IMR-90 (cell line): ENCODE measurements at regions of chr9 and their contacts with region 1.

Region 1: DNA sequence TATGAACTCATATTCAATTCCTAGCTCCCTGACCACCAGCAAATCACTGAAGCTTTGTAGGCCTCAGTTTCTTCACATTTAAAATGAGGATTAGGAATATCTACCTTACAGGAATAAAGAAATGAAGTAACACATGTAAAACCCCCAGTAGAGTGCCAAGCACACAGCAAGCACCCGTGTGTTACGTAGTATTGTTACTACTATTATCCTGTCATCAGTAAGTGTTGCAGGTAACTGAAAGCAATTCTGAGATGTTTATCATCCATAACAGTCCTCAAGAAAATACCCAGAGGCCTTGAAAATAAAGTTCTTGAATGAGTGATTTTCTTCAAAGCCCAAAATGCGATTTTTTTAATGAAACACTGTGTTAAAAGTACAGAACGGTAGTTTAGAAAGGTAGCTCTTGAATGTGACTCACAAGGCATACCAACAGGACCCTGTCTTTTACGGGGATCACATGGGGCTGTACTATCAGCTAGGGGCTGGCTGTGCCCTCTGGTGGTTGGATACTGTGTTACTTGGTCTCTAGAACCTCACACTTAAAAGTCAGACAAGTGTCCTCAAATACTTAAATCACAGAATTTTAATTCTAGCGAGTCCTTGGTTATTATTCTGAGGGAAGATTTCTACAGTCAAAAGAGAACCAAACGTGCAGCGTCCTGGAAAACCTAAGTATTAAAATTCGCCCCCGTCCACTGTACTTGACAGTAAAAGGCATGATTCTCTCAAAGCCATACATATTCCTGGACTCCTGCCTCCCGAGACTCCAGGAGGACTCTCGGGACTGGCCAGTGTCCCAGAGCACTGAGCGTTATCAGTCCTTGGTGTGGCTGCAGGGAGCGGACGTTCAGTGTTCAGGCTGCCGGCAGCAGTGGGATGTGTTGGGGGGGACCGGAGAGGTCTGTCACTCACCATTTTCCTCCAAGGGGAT is 725 bp downstream of the NDUFB6 start:
- DNase-seq: peak; percentile 82
- ATAC-seq: peak; percentile 81
- H3K4me3 ChIP-seq: peak overlapping the region; percentile 79
- H3K27ac ChIP-seq: peak overlapping the region; percentile 78
- H3K4me1 ChIP-seq: no peaks in the 10 kb centered on the region
- H3K27me3 ChIP-seq: no peaks in the 10 kb centered on the region
- CTCF ChIP-seq: peak; percentile 77
- POLR2A ChIP-seq: no peak
- RAD21 ChIP-seq: peak; percentile 74

Region 2: GRCh38 chr9:31542384-31543055 is 1029.7 kb before region 1 on chr9:
- CTCF ChIA-PET with region 1: no interaction called
- POLR2A ChIA-PET with region 1: no interaction called
- dilution Hi-C with region 1: no loop called
- in situ Hi-C with region 1: no loop called
- intact Hi-C with region 1: no loop called
- DNase-seq: peak; percentile 4
- ATAC-seq: no peak
- H3K4me3 ChIP-seq: no peak overlapping the region
- H3K27ac ChIP-seq: no peak overlapping the region
- H3K4me1 ChIP-seq: no peaks in the 10 kb centered on the region
- H3K27me3 ChIP-seq: no peaks in the 10 kb centered on the region
- CTCF ChIP-seq: no peak
- POLR2A ChIP-seq: no peak
- RAD21 ChIP-seq: no peak

Region 3: GRCh38 chr9:32431940-32432555 is 140.2 kb before region 1 on chr9:
- CTCF ChIA-PET with region 1: interaction called, 5 read pairs
- POLR2A ChIA-PET with region 1: no interaction called
- dilution Hi-C with region 1: loop called (anchors 25 kb)
- in situ Hi-C with region 1: no loop called
- intact Hi-C with region 1: loop called (anchors 5 kb)
- DNase-seq: peak; percentile 64
- ATAC-seq: peak; percentile 43
- H3K4me3 ChIP-seq: no peak overlapping the region
- H3K27ac ChIP-seq: peak overlapping the region; percentile 82
- H3K4me1 ChIP-seq: peaks cover 35% of the 10 kb centered on the region
- H3K27me3 ChIP-seq: no peaks in the 10 kb centered on the region
- CTCF ChIP-seq: peak; percentile 57
- POLR2A ChIP-seq: no peak
- RAD21 ChIP-seq: peak; percentile 55

Region 4: GRCh38 chr9:32526041-32526706 is 46.1 kb before region 1 on chr9 and contains the start of gene RIGI:
- CTCF ChIA-PET with region 1: interaction called, 4 read pairs
- POLR2A ChIA-PET with region 1: no interaction called
- dilution Hi-C with region 1: no loop called
- in situ Hi-C with region 1: no loop called
- intact Hi-C with region 1: loop called (anchors 1 kb)
- DNase-seq: peak; percentile 93
- ATAC-seq: peak; percentile 95
- H3K4me3 ChIP-seq: peak within 1 kb of the TSS; percentile 86
- H3K27ac ChIP-seq: peak within 1 kb of the TSS; percentile 91
- H3K4me1 ChIP-seq: peaks cover 3% of the 10 kb centered on the region
- H3K27me3 ChIP-seq: no peaks in the 10 kb centered on the region
- CTCF ChIP-seq: peak; percentile 32; the same call in 1 of the 2 replicates
- POLR2A ChIP-seq: peak; percentile 78
- RAD21 ChIP-seq: peak; percentile 34; the same call in 1 of the 2 replicates
- total RNA-seq, gene RIGI: 13.6 and 18.1 TPM in 2 replicates

Region 5: DNA sequence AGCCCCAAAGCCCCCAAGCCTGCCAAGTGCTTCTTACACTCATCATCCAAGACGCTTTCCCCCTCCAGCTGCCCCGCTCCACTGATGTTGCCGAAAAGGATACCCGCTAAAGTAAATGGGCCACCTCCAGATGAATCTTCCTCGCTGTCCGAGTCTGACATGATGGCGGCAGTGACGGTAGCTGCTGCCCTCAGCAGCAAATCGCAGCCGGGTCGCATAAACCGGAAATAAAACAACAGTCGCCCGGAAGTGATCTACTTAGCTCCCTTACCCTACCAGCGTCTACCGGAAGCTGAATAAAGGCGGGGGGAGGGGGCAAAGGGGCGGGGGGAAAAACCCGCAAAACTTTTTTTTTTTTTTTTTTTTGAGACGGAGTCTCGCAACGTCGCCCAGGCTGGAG is 63.1 kb after region 1 on chr9 and contains the start of gene TAF1L:
- CTCF ChIA-PET with region 1: no interaction called
- POLR2A ChIA-PET with region 1: no interaction called
- dilution Hi-C with region 1: no loop called
- in situ Hi-C with region 1: no loop called
- intact Hi-C with region 1: no loop called
- DNase-seq: no peak
- ATAC-seq: no peak
- H3K4me3 ChIP-seq: no peak within 1 kb of the TSS
- H3K27ac ChIP-seq: no peak within 1 kb of the TSS
- H3K4me1 ChIP-seq: no peaks in the 10 kb centered on the region
- H3K27me3 ChIP-seq: no peaks in the 10 kb centered on the region
- CTCF ChIP-seq: no peak
- POLR2A ChIP-seq: no peak
- RAD21 ChIP-seq: no peak
- total RNA-seq, gene TAF1L: under 0.01 TPM in 1 of 2 replicates, not detected in the other

Region 6: GRCh38 chr9:33151007-33151557 is 578.8 kb after region 1 on chr9:
- CTCF ChIA-PET with region 1: no interaction called
- POLR2A ChIA-PET with region 1: no interaction called
- dilution Hi-C with region 1: no loop called
- in situ Hi-C with region 1: no loop called
- intact Hi-C with region 1: no loop called
- DNase-seq: peak; percentile 98
- ATAC-seq: peak; percentile 97
- H3K4me3 ChIP-seq: no peak overlapping the region; the same call in 1 of the 2 replicates
- H3K27ac ChIP-seq: peak overlapping the region; percentile 83
- H3K4me1 ChIP-seq: peaks cover 10% of the 10 kb centered on the region
- H3K27me3 ChIP-seq: no peaks in the 10 kb centered on the region
- CTCF ChIP-seq: no peak
- POLR2A ChIP-seq: no peak
- RAD21 ChIP-seq: no peak; the same call in 1 of the 2 replicates